Right cardiac atrium (tissue), 5 donors: ENCODE measurements at regions of chr4 and their contacts with region 1.

Region 1: GRCh38 chr4:128863312-128864075 is 54.0 kb downstream of the JADE1 start:
- DNase-seq: peak; percentile 80 to 87 (median 83)
- ATAC-seq: peak; percentile 55 to 83
- H3K4me3 ChIP-seq: no peak overlapping the region
- H3K27ac ChIP-seq: no peak overlapping the region
- H3K4me1 ChIP-seq: peaks cover 3% of the 10 kb centered on the region
- H3K27me3 ChIP-seq: no peaks in the 10 kb centered on the region

Region 2: GRCh38 chr4:128191115-128191781 is 672.2 kb before region 1 on chr4:
- intact Hi-C with region 1: loop called in 3 of 4 experiments (anchors 5 to 10 kb)
- DNase-seq: peak; percentile 50 to 72 (median 56)
- ATAC-seq: peak; percentile 85 to 89
- H3K4me3 ChIP-seq: no peak overlapping the region
- H3K27ac ChIP-seq: no peak overlapping the region
- H3K4me1 ChIP-seq: no peaks in the 10 kb centered on the region
- H3K27me3 ChIP-seq: no peaks in the 10 kb centered on the region

Region 3: DNA sequence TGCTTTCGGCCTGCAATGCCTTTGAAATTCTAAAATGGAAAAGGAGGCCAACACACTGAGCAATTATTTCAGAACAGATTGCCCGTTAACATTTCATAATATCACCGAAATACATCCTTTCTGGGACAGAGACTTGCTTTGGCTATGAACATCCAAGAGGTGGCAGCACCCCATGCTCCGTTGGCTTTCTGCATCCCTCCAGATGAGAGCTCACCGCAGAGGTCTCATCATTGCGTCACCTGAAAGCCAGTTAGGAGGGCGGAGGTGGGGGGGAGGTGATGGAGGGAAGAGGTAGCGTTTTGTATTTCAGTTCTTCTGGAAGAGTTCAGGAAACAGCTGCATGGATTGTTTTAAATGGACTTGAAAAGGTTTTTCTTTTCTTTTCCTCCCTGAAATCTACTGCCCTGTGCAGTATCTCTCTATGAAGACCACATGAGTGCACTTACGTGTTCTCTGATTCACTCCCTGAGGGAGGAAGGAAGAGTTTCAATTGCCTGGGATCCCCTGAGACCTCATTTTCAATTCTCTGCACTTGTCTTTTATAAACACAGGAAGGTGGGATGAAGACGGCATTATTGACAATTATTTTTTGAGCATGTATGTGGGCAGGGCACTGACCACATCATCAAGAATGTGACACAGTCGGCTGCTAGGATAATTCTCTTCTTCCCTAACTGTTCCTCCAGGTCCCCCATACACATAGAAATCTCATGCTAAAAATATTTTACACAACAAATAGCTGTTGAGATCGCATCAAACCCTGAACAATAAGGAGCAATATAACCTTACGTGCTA is 409.0 kb before region 1 on chr4:
- intact Hi-C with region 1: loop called in 2 of 4 experiments (anchors 5 to 10 kb)
- DNase-seq: peak; percentile 81 to 89 (median 83)
- ATAC-seq: peak; percentile 90 to 95
- H3K4me3 ChIP-seq: no peak overlapping the region
- H3K27ac ChIP-seq: no peak overlapping the region
- H3K4me1 ChIP-seq: peaks cover 3% of the 10 kb centered on the region
- H3K27me3 ChIP-seq: no peaks in the 10 kb centered on the region

Region 4: GRCh38 chr4:128558896-128559679 is 304.4 kb before region 1 on chr4:
- intact Hi-C with region 1: loop called in 3 of 4 experiments (anchors 10 kb)
- DNase-seq: peak in 2 of 3 donors; percentile 18 to 48
- ATAC-seq: peak; percentile 51 to 64
- H3K4me3 ChIP-seq: no peak overlapping the region
- H3K27ac ChIP-seq: peak overlapping the region; percentile 12
- H3K4me1 ChIP-seq: peaks cover 6% of the 10 kb centered on the region
- H3K27me3 ChIP-seq: no peaks in the 10 kb centered on the region

Region 5: DNA sequence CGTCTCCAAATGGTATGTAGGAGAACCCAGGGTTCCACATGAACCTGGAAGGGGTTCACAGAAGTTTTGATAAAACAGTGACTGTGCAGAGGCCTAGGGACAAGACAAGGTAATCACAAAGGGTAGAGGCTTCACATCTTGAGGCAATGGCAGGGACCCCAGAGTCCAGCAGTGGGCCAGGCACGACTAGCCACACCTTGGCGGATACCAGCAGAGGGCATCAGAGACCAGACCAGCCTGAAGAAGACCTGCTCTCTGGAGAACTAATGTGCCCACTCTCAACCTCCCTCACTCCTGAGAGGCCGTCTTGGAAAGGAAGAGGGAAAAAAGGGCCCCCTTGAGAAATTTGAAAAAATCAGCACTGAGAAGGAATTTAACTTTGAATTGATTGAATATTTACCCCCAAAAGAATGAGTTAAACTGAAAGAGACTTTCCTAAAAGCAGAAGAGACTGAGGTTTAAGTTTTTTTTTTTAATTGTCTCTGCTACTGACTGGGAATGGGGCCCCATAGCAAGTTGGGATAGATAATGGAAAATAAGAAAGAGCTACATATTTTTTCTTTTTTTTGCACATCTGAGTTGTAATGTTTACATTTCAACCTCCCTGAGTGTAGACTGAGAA is 297.8 kb before region 1 on chr4:
- intact Hi-C with region 1: loop called in 3 of 4 experiments (anchors 5 to 10 kb)
- DNase-seq: peak; percentile 31 to 76 (median 64)
- ATAC-seq: peak; percentile 69 to 85
- H3K4me3 ChIP-seq: no peak overlapping the region
- H3K27ac ChIP-seq: no peak overlapping the region
- H3K4me1 ChIP-seq: peaks cover 5% of the 10 kb centered on the region
- H3K27me3 ChIP-seq: no peaks in the 10 kb centered on the region